Activated naive CD4-positive, alpha-beta T cell treated with anti-CD3 and anti-CD28 coated beads for 36 hours (primary cell): ENCODE measurements at regions of chr10 and their contacts with region 1.

Region 1: DNA sequence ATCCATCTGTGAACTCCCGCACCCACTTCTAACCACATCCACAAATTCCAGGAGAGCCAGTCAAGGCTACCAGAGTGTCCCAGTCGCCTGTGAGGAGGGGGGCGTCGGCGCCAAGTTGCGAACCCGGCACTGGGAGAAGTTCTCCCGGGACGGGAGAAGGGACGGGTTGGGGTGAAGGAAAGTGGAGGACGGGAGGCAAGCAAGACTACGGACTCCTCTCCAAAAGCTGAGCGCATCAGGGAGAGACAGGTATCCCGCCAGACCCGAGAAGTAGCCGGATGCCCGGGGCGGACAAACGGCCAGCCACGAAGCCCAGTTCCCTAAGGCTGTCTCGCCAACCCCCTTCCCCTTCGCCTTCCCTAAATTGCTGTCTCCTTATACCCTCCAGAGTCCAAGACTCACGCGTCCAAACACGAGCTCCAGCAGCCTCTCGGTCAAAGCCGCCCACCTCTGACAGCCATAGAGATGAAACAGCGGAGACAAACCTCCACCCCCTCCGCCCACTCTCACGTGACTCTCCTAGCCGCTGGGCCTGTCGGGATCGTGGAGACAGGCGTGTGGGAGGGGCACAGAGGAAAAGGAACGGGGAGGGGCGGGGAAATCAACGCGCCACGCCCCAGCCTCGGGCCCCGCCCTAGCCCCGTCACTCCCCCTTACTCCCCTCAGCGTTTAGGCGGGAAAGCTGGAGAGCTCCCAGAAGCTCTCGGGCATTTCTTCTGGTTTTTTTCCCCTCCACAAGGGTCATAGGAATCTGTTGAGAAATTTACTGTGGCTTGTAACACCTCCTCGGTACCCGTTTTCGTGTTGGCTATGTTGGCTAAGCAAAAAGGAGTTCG is at the start of gene MICU1:
- DNase-seq: peak; percentile 98
- H3K4me3 Mint-ChIP-seq: peak within 1 kb of the TSS; percentile 97
- H3K27ac Mint-ChIP-seq: peak within 1 kb of the TSS; percentile 73
- H3K4me1 Mint-ChIP-seq: peaks cover 16% of the 10 kb centered on the region
- H3K27me3 Mint-ChIP-seq: no peaks in the 10 kb centered on the region
- total RNA-seq, gene MICU1: 40.0 to 41.9 TPM

Region 2: DNA sequence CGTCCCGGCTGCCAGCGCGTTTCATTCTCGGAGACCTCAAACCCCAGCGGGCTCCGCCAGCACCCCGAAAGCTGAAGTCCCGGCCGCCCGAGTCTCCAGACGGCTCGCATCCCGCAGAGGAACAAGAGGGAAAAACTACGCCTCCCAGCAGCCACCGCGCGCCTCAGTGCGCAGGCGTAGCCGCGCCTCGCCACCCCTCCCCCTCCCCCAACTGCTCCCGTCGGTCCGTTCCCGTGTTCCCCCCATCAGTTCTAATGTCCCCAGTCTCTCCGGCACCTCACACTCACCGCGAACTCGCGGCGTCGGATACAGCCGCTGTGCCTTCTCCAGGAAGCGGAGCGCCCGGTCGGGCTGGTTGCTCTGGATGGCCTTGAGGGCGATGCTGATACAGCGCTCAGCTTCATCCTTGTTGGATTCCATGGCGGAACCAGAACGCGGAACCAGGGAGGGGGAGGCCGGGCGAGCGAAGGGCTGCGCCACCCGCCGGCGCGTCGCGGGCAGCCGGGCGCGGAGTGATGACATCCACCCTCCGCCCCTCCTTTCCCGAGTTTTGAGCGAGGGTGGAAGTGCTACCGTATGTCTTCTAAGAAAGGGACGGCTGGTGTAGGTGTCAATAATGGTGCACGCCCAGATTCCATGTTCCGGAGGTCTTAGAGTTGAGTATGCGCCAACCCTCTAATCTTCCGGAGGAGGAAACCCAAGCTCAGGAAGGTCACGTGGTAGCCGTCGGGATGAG is 271.2 kb before region 1 on chr10 and contains the start of gene DNAJB12:
- CTCF ChIA-PET with region 1: no interaction called
- intact Hi-C with region 1: loop called (anchors 1 kb)
- DNase-seq: peak; percentile 91
- H3K4me3 Mint-ChIP-seq: peak within 1 kb of the TSS; percentile 96
- H3K27ac Mint-ChIP-seq: peak within 1 kb of the TSS; percentile 97
- H3K4me1 Mint-ChIP-seq: peaks cover 34% of the 10 kb centered on the region
- H3K27me3 Mint-ChIP-seq: no peaks in the 10 kb centered on the region
- total RNA-seq, gene DNAJB12: 13.7 to 14.1 TPM

Region 3: GRCh38 chr10:72637398-72637857 is 11.6 kb after region 1 on chr10:
- CTCF ChIA-PET with region 1: no interaction called
- intact Hi-C with region 1: loop called (anchors 1 kb)
- DNase-seq: peak; percentile 57
- H3K4me3 Mint-ChIP-seq: no peak overlapping the region
- H3K27ac Mint-ChIP-seq: no peak overlapping the region
- H3K4me1 Mint-ChIP-seq: peaks cover 4% of the 10 kb centered on the region
- H3K27me3 Mint-ChIP-seq: no peaks in the 10 kb centered on the region

Region 4: GRCh38 chr10:72692057-72692910 is 66.5 kb after region 1 on chr10 and contains the start of gene MCU:
- CTCF ChIA-PET with region 1: no interaction called
- intact Hi-C with region 1: loop called (anchors 1 kb)
- DNase-seq: peak; percentile 95
- H3K4me3 Mint-ChIP-seq: peak within 1 kb of the TSS; percentile 83
- H3K27ac Mint-ChIP-seq: no peak within 1 kb of the TSS
- H3K4me1 Mint-ChIP-seq: peaks cover 32% of the 10 kb centered on the region
- H3K27me3 Mint-ChIP-seq: no peaks in the 10 kb centered on the region
- total RNA-seq, gene MCU: 23.6 to 25.6 TPM